Heart left ventricle (tissue), 16 donors: ENCODE measurements at regions of chr6 and their contacts with region 1.

Region 1: GRCh38 chr6:104728448-104728847 is 131.3 kb downstream of the HACE1 start:
- DNase-seq: no peak
- ATAC-seq: no peak
- H3K4me3 ChIP-seq: no peak overlapping the region
- H3K27ac ChIP-seq: no peak overlapping the region
- H3K4me1 ChIP-seq: peaks cover 0 to 13% (median 0%) of the 10 kb centered on the region in 12 donors
- H3K27me3 ChIP-seq: no peaks in the 10 kb centered on the region
- CTCF ChIP-seq: no peak
- POLR2A ChIP-seq: no peak

Region 2: GRCh38 chr6:104711371-104711770 is 17.1 kb before region 1 on chr6:
- intact Hi-C with region 1: no loop called
- DNase-seq: no peak
- ATAC-seq: no peak
- H3K4me3 ChIP-seq: no peak overlapping the region
- H3K27ac ChIP-seq: no peak overlapping the region
- H3K4me1 ChIP-seq: peaks cover 0 to 4% (median 0%) of the 10 kb centered on the region in 12 donors
- H3K27me3 ChIP-seq: no peaks in the 10 kb centered on the region
- CTCF ChIP-seq: no peak
- POLR2A ChIP-seq: no peak

Region 3: DNA sequence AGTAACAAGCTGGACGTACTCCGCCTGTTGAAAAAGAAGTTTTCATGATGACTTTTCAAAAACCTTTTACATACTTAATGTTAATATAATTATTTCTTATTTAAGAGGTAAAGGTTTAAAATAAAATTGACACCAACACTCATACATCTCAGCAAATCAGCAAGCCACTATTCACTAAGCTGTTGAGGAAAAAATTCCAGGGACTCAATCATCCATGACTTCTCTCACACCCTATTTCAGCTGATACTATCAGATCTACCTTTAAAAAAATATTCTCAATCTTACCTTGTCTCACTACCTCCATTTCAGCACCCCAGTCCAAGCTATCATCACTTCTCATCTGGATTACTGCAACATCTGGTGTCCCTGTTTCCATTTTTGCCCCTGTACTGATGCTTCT is 22.0 kb after region 1 on chr6:
- intact Hi-C with region 1: loop called in 1 of 10 experiments (anchors 1 kb)
- DNase-seq: no peak
- ATAC-seq: no peak
- H3K4me3 ChIP-seq: no peak overlapping the region
- H3K27ac ChIP-seq: no peak overlapping the region
- H3K4me1 ChIP-seq: no peaks in the 10 kb centered on the region
- H3K27me3 ChIP-seq: no peaks in the 10 kb centered on the region
- CTCF ChIP-seq: no peak
- POLR2A ChIP-seq: no peak

Region 4: DNA sequence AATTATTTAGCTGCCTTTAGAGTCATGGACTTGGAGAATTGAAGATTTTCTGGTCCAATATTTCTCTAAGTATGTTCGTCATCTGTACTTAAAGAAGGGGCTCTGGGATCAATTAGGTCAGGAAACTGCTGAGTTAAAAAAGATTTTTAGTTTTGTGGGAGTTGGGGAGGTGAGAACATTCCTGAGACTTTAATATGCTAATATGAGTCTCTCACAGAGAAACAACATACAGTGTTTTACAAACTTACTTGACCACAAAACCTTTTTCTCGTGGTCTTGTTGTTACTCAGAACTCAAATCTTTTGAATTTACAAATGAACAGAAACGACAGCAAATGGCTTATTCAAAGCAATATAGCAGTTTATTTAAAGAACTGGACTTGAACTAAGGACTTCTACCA is 296.4 kb after region 1 on chr6:
- intact Hi-C with region 1: no loop called
- DNase-seq: no peak
- ATAC-seq: no peak
- H3K4me3 ChIP-seq: no peak overlapping the region
- H3K27ac ChIP-seq: no peak overlapping the region
- H3K4me1 ChIP-seq: no peaks in the 10 kb centered on the region
- H3K27me3 ChIP-seq: peaks cover 0 to 7% (median 0%) of the 10 kb centered on the region in 9 donors
- CTCF ChIP-seq: no peak
- POLR2A ChIP-seq: no peak